T-cell (primary cell): ENCODE measurements at regions of chr12 and their contacts with region 1.

Region 1: GRCh38 chr12:57576613-57577160 is 14.3 kb upstream of the PIP4K2C start:
- DNase-seq: no peak
- ATAC-seq: no peak
- H3K4me3 ChIP-seq: no peak overlapping the region
- H3K4me3 Mint-ChIP-seq: no peak overlapping the region
- H3K27ac ChIP-seq: no peak overlapping the region
- H3K27ac Mint-ChIP-seq: no peak overlapping the region
- H3K4me1 ChIP-seq: no peaks in the 10 kb centered on the region
- H3K4me1 Mint-ChIP-seq: no peaks in the 10 kb centered on the region
- H3K27me3 ChIP-seq: peaks cover 0 to 12% of the 10 kb centered on the region in 2 experiments
- H3K27me3 Mint-ChIP-seq: peaks cover 0 to 3% of the 10 kb centered on the region in 2 donors

Region 2: DNA sequence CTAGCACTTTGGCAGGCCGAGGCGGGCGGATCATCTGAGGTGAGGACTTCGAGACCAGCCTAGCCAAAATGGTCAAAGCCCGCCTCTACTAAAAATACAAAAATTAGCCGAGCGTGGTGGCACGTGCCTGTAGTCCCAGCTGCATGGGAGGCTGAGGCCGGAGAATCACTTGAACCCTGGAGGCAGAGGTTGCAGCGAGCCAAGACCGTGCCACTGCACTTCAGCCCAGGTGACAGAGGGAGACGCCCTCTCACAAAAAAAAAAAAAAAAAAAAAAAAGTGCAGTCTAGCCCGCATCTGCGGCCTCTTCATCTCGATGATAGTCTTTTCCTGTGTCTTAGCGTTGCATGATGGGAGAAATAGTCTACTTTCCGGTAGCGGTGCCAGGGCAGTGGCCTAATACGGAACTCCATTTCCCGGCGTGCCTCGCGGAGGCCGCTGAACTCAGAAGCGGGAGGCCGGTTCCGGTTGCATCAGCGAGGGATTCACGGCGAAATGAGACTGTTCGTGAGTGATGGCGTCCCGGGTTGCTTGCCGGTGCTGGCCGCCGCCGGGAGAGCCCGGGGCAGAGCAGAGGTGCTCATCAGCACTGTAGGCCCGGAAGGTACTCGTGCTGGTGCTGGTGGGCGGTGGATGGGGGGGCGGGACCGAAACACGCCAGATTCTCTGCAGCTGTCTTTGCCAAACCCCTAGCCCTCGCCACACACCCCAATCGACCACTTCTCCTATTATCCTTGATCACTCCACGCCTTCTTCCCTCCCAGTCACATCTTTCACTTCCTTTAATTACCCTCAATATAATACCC is 88.9 kb before region 1 on chr12 and contains the start of gene MARS1:
- CTCF ChIA-PET with region 1: no interaction called
- POLR2A ChIA-PET with region 1: interaction called in 1 of 2 experiments, 10 read pairs
- DNase-seq: peak; percentile 74 to 97 (median 91)
- ATAC-seq: peak; percentile 98 to 99 (median 98)
- H3K4me3 ChIP-seq: peak within 1 kb of the TSS; percentile 94 to 95
- H3K4me3 Mint-ChIP-seq: peak within 1 kb of the TSS; percentile 90 to 98 (median 96)
- H3K27ac ChIP-seq: peak within 1 kb of the TSS; percentile 66
- H3K27ac Mint-ChIP-seq: peak within 1 kb of the TSS; percentile 94 to 95
- H3K4me1 ChIP-seq: peaks cover 12 to 23% of the 10 kb centered on the region in 2 experiments
- H3K4me1 Mint-ChIP-seq: peaks cover 38 to 40% (median 38%) of the 10 kb centered on the region in 3 donors
- H3K27me3 ChIP-seq: no peaks in the 10 kb centered on the region
- H3K27me3 Mint-ChIP-seq: no peaks in the 10 kb centered on the region
- total RNA-seq, gene MARS1: 167 to 350 (median 320) TPM

Region 3: DNA sequence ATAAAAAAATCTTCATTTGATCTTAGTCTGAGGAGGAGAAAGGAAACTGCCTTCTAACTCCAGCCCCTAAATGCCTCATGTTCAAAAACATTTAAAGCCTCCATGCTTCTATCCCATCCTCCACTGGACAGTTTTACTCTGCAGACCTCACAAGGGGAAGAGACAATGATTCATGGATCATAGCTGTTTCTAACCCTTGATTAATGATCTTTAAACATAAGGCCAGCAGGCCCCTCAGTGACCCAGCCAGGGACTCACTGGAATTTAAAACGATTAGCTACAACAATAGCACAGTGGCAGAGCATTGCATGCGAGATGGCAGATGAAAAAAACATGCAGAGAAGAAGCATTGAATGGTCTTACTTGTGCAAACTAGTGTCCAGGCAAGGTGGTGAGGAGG is 35.7 kb before region 1 on chr12:
- CTCF ChIA-PET with region 1: no interaction called
- POLR2A ChIA-PET with region 1: no interaction called
- DNase-seq: no peak
- ATAC-seq: no peak
- H3K4me3 ChIP-seq: no peak overlapping the region
- H3K4me3 Mint-ChIP-seq: no peak overlapping the region
- H3K27ac ChIP-seq: no peak overlapping the region
- H3K27ac Mint-ChIP-seq: peak overlapping the region in 1 of 2 donors; percentile 39
- H3K4me1 ChIP-seq: peaks cover 0 to 11% of the 10 kb centered on the region in 2 experiments
- H3K4me1 Mint-ChIP-seq: peaks cover 17 to 29% (median 27%) of the 10 kb centered on the region in 3 donors
- H3K27me3 ChIP-seq: no peaks in the 10 kb centered on the region
- H3K27me3 Mint-ChIP-seq: no peaks in the 10 kb centered on the region

Region 4: GRCh38 chr12:57621497-57622292 is 45.0 kb after region 1 on chr12:
- CTCF ChIA-PET with region 1: interaction called in 1 of 2 experiments, 10 read pairs
- POLR2A ChIA-PET with region 1: no interaction called
- DNase-seq: peak in 25 of 35 experiments; percentile 11 to 74 (median 40)
- ATAC-seq: peak; percentile 72 to 78 (median 74)
- H3K4me3 ChIP-seq: peak overlapping the region; percentile 39 to 68
- H3K4me3 Mint-ChIP-seq: peak overlapping the region; percentile 71 to 86 (median 72)
- H3K27ac ChIP-seq: no peak overlapping the region
- H3K27ac Mint-ChIP-seq: peak overlapping the region in 1 of 2 donors; percentile 81
- H3K4me1 ChIP-seq: peaks cover 7 to 32% of the 10 kb centered on the region in 2 experiments
- H3K4me1 Mint-ChIP-seq: peaks cover 26 to 33% (median 33%) of the 10 kb centered on the region in 3 donors
- H3K27me3 ChIP-seq: peaks cover 16 to 97% of the 10 kb centered on the region in 2 experiments
- H3K27me3 Mint-ChIP-seq: peaks cover 88 to 95% of the 10 kb centered on the region in 2 donors